Activated CD8-positive, alpha-beta T cell treated with anti-CD3 and anti-CD28 coated beads for 36 hours (primary cell): ENCODE measurements at regions of chr14 and their contacts with region 1.

Region 1: DNA sequence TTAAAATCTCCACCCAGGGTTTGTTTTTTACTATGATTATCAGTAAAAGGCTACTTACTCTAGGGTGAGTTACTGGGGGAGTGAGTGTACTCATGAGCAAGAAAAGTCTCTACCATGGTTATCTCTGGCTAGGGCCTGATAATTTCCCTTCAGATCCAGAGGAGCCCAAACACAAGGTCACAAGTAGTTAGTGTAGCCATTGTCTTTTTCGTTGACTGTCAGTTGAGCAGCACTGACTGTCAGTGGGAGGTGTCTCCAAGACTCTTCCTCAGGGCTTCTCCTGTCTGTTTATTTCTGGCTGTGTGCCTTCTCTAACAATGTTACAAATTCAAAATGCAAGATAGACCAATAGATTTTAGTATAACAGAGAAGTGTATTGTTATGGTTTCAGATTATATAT is 181.2 kb upstream of the MIS18BP1 start:
- DNase-seq: no peak
- ATAC-seq: no peak
- H3K4me3 Mint-ChIP-seq: no peak overlapping the region
- H3K27ac Mint-ChIP-seq: no peak overlapping the region
- H3K4me1 Mint-ChIP-seq: no peaks in the 10 kb centered on the region
- H3K27me3 Mint-ChIP-seq: no peaks in the 10 kb centered on the region
- CTCF ChIP-seq: no peak

Region 2: GRCh38 chr14:45526715-45527549 is 92.7 kb after region 1 on chr14:
- CTCF ChIA-PET with region 1: no interaction called
- POLR2A ChIA-PET with region 1: no interaction called
- intact Hi-C with region 1: loop called (anchors 10 kb)
- DNase-seq: peak; percentile 7
- ATAC-seq: no peak
- H3K4me3 Mint-ChIP-seq: no peak overlapping the region
- H3K27ac Mint-ChIP-seq: no peak overlapping the region
- H3K4me1 Mint-ChIP-seq: no peaks in the 10 kb centered on the region
- H3K27me3 Mint-ChIP-seq: no peaks in the 10 kb centered on the region
- CTCF ChIP-seq: peak; percentile 35